Aorta (tissue), 5 donors: ENCODE measurements at regions of chr5 and their contacts with region 1.

Region 1: DNA sequence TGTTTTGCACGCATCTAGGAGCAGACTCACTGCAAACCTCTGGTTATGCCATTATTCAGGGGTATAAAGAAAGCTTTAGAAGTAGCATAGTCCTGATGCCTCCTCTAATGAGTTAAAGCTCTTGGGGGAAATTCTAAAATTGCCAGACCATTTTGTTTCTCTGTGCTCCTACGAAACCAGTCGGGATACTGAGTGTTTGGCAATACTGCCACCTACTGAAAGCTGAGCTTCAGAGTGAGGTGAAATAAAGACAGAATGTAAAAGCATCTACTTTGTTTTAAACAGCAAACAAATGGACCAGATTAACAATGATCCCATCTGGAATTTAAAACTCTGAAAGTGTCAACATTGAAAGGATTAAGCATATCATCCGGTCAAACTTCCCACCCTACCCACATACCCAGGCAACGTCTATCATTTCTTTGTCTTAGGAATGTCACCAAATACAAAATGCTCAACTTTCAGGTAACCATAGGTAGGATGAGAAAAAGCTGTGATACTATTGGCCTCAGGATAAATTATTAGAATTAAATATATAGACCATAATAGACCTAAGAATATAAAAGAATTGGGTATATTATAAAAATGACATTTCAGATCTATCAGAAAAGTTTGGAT is 77.8 kb upstream of the SHISAL2B start:
- DNase-seq: no peak
- ATAC-seq: peak; percentile 81
- H3K4me3 ChIP-seq: no peak overlapping the region
- H3K27ac ChIP-seq: no peak overlapping the region
- H3K4me1 ChIP-seq: peaks cover 0 to 2% of the 10 kb centered on the region in 2 donors
- H3K27me3 ChIP-seq: no peaks in the 10 kb centered on the region

Region 2: DNA sequence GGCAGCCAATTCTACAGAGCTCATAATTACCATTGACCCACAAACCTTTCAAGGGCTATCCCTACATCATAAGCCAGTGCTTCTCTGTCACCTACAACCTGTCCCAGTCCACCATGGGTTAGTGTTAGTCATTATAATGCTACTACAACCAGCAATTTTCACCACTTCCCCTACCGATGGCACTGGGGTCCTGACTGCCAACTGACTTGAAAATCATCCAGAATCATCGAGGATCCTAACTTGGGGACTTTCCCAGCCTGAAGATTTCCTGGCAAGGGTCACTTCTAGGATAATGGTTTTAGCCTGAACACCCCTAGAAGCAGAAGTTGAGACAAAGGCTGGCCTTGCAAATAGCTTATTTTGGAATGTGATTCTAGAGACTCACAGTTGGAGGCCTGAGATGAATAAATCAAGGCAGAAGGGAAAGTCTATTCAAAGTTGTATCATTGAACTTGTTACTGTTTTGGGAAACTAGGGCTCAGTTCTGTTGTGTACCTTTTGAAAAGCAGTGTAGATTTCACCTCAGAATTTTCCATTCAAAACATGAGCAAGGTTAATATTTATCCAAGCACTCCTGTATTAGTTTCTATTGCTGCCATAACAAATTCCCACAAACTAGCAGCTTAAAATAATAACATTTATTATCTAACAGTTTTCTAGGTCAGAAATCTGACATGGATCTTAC is 1400.9 kb before region 1 on chr5:
- intact Hi-C with region 1: no loop called
- DNase-seq: no peak
- ATAC-seq: no peak
- H3K4me3 ChIP-seq: no peak overlapping the region
- H3K27ac ChIP-seq: no peak overlapping the region
- H3K4me1 ChIP-seq: no peaks in the 10 kb centered on the region
- H3K27me3 ChIP-seq: no peaks in the 10 kb centered on the region

Region 3: DNA sequence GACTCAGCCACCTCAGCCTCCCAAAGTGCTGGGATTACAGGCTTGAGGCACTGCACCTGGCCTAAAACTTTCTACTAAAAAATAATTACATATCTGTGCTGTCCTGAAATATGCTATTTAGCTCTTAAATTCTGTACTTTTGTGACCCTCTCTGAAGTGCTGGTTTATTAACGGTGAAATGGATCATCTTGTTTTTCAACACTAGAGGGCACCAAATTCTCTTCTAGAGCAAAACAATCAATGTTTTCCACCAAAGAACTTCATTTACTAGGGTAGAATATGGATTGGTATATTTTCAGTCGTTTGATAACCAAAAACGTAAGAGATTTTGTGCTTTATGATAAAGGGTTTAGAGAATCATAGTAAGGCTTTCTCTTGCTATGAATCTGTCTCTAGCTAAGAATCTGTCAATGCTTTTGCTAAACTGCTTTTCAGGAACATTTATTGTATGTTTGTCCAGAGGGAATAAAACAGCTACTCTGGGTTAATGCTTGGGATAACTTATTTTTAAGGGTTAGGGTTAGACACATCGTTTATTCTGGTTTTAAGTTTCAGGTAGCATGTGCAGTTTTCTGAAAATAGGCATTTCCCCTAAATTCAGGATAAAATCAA is 383.2 kb before region 1 on chr5:
- intact Hi-C with region 1: loop called (anchors 5 kb)
- DNase-seq: no peak
- ATAC-seq: peak; percentile 62
- H3K4me3 ChIP-seq: no peak overlapping the region
- H3K27ac ChIP-seq: no peak overlapping the region
- H3K4me1 ChIP-seq: no peaks in the 10 kb centered on the region
- H3K27me3 ChIP-seq: no peaks in the 10 kb centered on the region